ENCODE measurements at regions of chr19 and their contacts with region 1.

Region 1: GRCh38 chr19:16542045-16542909 is at the start of gene CHERP:
- DNase-seq: peak; percentile 38
- ATAC-seq: peak; percentile 93
- H3K4me3 ChIP-seq: peak within 1 kb of the TSS; percentile 95 to 97
- H3K27ac ChIP-seq: peak within 1 kb of the TSS; percentile 90
- H3K4me1 ChIP-seq: peaks cover 8% of the 10 kb centered on the region; the same call in 1 of the 2 replicates
- H3K27me3 ChIP-seq: no peaks in the 10 kb centered on the region
- CTCF ChIP-seq: no peak
- total RNA-seq, gene CHERP: 48.3 TPM

Region 2: DNA sequence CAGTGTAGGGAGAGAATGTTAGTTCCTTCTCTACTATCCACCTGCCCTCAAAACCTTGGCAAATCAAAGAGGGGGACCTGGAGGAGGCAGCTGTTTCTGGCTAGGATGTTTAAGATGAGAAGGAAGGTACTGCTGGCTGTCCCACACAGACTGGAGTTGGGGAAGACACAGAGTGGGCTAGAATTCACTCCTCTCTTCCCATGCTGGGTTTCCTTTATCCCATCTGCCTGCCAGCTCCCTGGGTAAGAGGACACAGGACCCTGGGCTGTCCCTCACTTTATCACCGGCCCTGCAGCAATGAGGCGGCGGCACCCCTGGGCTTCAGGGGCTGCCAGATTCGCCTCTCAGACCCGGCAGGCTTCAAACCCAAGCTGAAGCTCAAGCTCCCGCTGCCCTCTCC is 148.2 kb before region 1 on chr19:
- CTCF ChIA-PET with region 1: no interaction called
- POLR2A ChIA-PET with region 1: interaction called, 13 read pairs
- in situ Hi-C with region 1: no loop called
- intact Hi-C with region 1: no loop called
- DNase-seq: no peak
- ATAC-seq: no peak
- H3K4me3 ChIP-seq: no peak overlapping the region
- H3K27ac ChIP-seq: no peak overlapping the region
- H3K4me1 ChIP-seq: no peaks in the 10 kb centered on the region
- H3K27me3 ChIP-seq: no peaks in the 10 kb centered on the region
- CTCF ChIP-seq: no peak

Region 3: GRCh38 chr19:16470911-16471811 is 71.1 kb before region 1 on chr19:
- CTCF ChIA-PET with region 1: no interaction called
- POLR2A ChIA-PET with region 1: no interaction called
- in situ Hi-C with region 1: no loop called
- intact Hi-C with region 1: no loop called
- DNase-seq: no peak
- ATAC-seq: peak; percentile 43
- H3K4me3 ChIP-seq: peak overlapping the region; percentile 72 to 80
- H3K27ac ChIP-seq: peak overlapping the region; percentile 69
- H3K4me1 ChIP-seq: peaks cover 10% of the 10 kb centered on the region
- H3K27me3 ChIP-seq: no peaks in the 10 kb centered on the region
- CTCF ChIP-seq: no peak

Region 4: DNA sequence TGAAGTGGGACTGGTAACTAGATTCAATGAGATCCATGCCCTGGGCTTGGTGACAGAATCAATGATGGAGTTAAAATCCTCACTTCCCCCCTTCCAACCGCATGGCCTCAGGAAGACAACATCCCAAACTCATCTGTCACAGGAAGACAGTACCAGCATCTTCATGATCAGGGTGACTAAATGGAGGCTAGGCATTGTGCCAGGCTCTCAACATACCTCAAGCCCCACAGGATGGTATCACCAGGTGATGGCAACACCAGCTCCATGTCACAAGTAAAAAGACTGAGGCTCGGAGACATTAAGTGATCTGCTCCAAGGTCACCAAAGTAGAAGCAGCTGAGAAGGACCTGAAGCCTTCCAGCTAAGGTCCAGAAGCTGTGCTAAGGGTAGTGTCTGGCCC is 71.6 kb after region 1 on chr19:
- CTCF ChIA-PET with region 1: interaction called, 10 read pairs
- POLR2A ChIA-PET with region 1: no interaction called
- in situ Hi-C with region 1: no loop called
- intact Hi-C with region 1: no loop called
- DNase-seq: no peak
- ATAC-seq: no peak
- H3K4me3 ChIP-seq: no peak overlapping the region
- H3K27ac ChIP-seq: no peak overlapping the region
- H3K4me1 ChIP-seq: no peaks in the 10 kb centered on the region
- H3K27me3 ChIP-seq: no peaks in the 10 kb centered on the region
- CTCF ChIP-seq: no peak

Region 5: DNA sequence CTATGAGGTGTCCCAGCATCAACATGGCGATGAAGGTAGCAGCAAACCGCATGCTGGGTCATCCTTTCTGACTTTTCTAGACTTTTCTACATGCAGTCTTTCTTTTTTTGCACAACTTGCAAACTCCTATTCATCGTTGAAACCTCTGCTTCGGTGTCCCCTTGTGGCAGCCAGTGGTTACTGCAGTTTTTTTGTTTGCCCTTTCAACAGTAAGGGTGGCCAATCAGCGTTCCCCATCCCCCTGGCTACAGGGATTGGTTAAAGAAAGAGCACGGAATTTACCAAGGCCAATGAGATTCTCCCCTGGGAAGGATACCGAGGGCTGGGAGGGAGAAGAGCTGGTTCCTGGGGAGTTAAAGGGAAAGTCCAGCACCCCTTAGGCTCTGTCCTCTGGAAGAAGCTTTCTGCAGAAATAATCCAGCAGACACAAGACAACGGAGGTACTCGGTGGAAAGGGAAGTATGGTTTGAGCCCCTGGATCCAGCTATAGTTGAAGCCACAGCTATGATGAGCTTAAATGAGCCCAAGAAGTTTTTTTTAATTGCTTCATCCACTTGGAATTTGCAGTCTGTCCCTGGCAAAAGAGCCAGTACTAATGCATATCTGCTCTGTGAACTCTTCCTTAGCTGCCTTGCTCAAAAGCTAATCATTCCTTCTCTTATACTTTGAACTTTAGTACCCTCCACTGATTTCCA is 1786.2 kb after region 1 on chr19:
- CTCF ChIA-PET with region 1: interaction called, 10 read pairs
- POLR2A ChIA-PET with region 1: no interaction called
- in situ Hi-C with region 1: no loop called
- intact Hi-C with region 1: no loop called
- DNase-seq: peak; percentile 86
- ATAC-seq: peak; percentile 99
- H3K4me3 ChIP-seq: peak overlapping the region; percentile 31 to 51
- H3K27ac ChIP-seq: peak overlapping the region; percentile 84
- H3K4me1 ChIP-seq: peaks cover 12% of the 10 kb centered on the region
- H3K27me3 ChIP-seq: no peaks in the 10 kb centered on the region
- CTCF ChIP-seq: peak; percentile 91